CD8-positive, alpha-beta T cell (primary cell): ENCODE measurements at regions of chr2 and their contacts with region 1.

Region 1: DNA sequence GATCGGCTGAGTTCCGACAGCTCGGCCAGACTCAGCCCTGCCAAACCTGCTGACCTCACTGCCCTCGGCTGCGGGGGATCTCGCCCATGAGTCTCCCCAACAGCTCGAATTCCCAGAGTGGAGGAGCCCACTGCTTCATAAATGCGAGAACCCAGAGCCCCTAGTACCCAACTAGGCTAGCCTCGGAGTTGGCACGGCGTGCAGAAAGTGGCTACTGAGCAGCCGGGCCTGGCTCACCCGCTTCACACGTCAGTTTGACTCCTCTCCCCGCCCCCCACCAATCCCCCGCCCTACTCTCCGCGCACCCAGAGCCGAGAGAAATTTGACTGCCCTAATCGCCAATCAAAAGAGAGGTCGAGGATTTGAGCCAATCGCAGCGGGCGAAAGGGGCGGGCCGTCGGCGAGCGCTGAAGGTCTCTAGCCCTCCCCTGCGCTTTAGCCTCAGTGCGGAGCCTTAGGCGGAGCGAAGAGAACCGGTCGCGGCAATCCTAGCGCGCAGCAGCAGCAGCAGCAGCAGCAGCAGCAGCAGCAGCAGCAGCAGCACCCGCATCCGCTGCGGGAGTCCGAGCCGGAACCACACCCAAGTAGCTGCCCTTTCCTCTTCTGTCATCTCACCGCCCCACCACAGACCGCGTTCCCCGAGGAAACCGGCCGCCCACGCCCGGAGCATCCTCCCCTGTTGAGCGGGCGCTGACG is at the start of gene GLS:
- DNase-seq: peak; percentile 93 to 98 (median 96)
- ATAC-seq: peak; percentile 75
- H3K4me3 ChIP-seq: peak within 1 kb of the TSS; percentile 82 to 95
- H3K4me3 Mint-ChIP-seq: peak within 1 kb of the TSS; percentile 98
- H3K27ac ChIP-seq: peak within 1 kb of the TSS; percentile 93 to 94
- H3K27ac Mint-ChIP-seq: peak within 1 kb of the TSS; percentile 99
- H3K4me1 ChIP-seq: peaks cover 50% of the 10 kb centered on the region
- H3K4me1 Mint-ChIP-seq: peaks cover 50% of the 10 kb centered on the region
- H3K27me3 ChIP-seq: no peaks in the 10 kb centered on the region
- H3K27me3 Mint-ChIP-seq: no peaks in the 10 kb centered on the region
- CTCF ChIP-seq: no peak
- total RNA-seq, gene GLS: 254 to 265 TPM

Region 2: GRCh38 chr2:189661148-189661956 is 1219.2 kb before region 1 on chr2 and contains the start of gene ASNSD1:
- CTCF ChIA-PET with region 1: no interaction called
- POLR2A ChIA-PET with region 1: no interaction called
- intact Hi-C with region 1: loop called (anchors 10 kb)
- DNase-seq: peak; percentile 97 to 100 (median 99)
- ATAC-seq: peak; percentile 89
- H3K4me3 ChIP-seq: peak within 1 kb of the TSS; percentile 79 to 88
- H3K4me3 Mint-ChIP-seq: no peak within 1 kb of the TSS
- H3K27ac ChIP-seq: peak within 1 kb of the TSS; percentile 87 to 91
- H3K27ac Mint-ChIP-seq: no peak within 1 kb of the TSS
- H3K4me1 ChIP-seq: peaks cover 47% of the 10 kb centered on the region
- H3K4me1 Mint-ChIP-seq: peaks cover 61% of the 10 kb centered on the region
- H3K27me3 ChIP-seq: no peaks in the 10 kb centered on the region
- H3K27me3 Mint-ChIP-seq: no peaks in the 10 kb centered on the region
- CTCF ChIP-seq: peak; percentile 92
- total RNA-seq, gene ASNSD1: 62.7 to 69.4 TPM

Region 3: DNA sequence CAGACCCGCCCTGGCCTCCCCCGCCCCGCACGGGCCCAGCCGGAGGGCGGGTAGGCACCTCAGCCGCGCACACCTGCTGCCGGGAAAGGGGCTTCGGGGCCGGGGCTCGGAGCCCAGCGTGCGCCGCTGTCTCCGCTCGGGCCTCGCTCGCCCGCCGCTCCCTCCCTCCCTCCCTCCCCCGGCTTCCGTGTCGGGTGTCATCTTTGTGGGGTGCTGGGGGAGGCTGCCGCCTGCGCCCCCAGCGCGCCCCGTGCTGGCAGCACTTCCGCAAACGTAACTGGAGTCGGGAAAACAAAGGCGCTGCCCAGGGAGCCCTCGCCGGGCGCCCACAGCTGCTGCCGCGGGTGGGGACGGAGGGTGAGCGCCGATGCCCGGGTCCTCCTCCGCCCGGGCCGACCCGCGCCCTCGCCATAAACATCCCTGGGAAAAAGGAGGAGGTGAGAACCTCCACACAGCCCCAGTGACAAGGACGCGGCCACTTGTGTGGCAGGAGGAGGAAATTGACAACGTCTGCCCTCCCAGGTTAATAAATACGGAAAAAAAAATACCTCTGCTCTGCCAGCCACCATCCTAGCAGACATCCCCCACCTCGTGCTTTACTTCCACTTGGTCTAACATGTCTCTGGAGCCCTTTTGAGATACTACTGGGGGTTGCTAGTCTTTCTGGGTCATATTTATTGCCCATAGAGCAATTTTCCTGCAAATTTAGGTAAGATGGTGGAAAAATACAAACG is 471.8 kb before region 1 on chr2:
- CTCF ChIA-PET with region 1: no interaction called
- POLR2A ChIA-PET with region 1: interaction called, 11 read pairs
- intact Hi-C with region 1: loop called (anchors 1 to 5 kb)
- DNase-seq: peak; percentile 62 to 92 (median 80)
- ATAC-seq: peak; percentile 56
- H3K4me3 ChIP-seq: peak overlapping the region; percentile 69 to 89
- H3K4me3 Mint-ChIP-seq: peak overlapping the region; percentile 92
- H3K27ac ChIP-seq: peak overlapping the region; percentile 98 to 99
- H3K27ac Mint-ChIP-seq: peak overlapping the region; percentile 99
- H3K4me1 ChIP-seq: peaks cover 51% of the 10 kb centered on the region
- H3K4me1 Mint-ChIP-seq: peaks cover 45% of the 10 kb centered on the region
- H3K27me3 ChIP-seq: no peaks in the 10 kb centered on the region
- H3K27me3 Mint-ChIP-seq: no peaks in the 10 kb centered on the region
- CTCF ChIP-seq: no peak

Region 4: DNA sequence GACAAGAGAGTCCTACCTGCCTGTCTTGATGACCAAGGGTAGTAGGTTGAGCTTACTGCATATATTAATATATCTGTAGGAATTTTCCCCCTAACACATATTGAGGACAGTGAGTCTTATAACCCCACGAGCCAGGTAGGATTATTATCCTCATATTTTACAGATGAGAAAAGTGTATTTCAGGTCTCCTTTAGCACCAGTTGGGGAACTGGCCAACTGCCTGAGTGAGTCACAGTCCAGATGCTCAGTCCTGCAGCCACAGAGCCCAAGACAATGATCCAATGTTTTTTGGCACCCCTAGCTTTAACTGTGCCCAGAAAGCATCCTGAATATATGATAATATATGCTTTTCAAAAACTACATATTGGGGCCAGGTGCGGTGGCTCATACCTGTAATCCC is 30.8 kb before region 1 on chr2:
- CTCF ChIA-PET with region 1: interaction called, 70 read pairs
- POLR2A ChIA-PET with region 1: interaction called, 24 read pairs
- intact Hi-C with region 1: loop called (anchors 1 to 2 kb)
- DNase-seq: no peak
- ATAC-seq: no peak
- H3K4me3 ChIP-seq: no peak overlapping the region
- H3K4me3 Mint-ChIP-seq: no peak overlapping the region
- H3K27ac ChIP-seq: no peak overlapping the region
- H3K27ac Mint-ChIP-seq: no peak overlapping the region
- H3K4me1 ChIP-seq: no peaks in the 10 kb centered on the region
- H3K4me1 Mint-ChIP-seq: peaks cover 2% of the 10 kb centered on the region
- H3K27me3 ChIP-seq: no peaks in the 10 kb centered on the region
- H3K27me3 Mint-ChIP-seq: no peaks in the 10 kb centered on the region
- CTCF ChIP-seq: no peak

Region 5: DNA sequence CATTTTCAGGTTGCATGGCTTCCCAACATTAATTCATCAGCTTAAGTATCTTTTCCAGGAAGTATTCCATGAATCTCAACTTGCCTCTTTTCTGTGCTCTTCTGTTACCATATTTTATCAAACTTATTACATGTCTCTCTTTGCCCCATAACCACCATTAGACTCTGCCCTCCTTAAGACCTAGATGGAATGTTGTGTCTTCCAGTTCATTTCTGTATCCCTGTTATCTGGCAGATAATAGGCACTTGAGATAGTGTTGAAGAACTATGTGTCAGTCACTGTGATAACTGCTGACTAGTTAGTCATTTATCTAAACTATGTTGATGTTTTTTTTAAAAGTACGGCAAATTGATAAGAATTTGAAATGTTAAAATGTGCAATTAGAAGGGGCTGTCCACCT is 41.9 kb after region 1 on chr2:
- CTCF ChIA-PET with region 1: no interaction called
- POLR2A ChIA-PET with region 1: interaction called, 4 read pairs
- intact Hi-C with region 1: loop called in 1 of 2 experiments (anchors 2 kb)
- DNase-seq: no peak
- ATAC-seq: no peak
- H3K4me3 ChIP-seq: no peak overlapping the region
- H3K4me3 Mint-ChIP-seq: no peak overlapping the region
- H3K27ac ChIP-seq: no peak overlapping the region
- H3K27ac Mint-ChIP-seq: peak overlapping the region; percentile 12
- H3K4me1 ChIP-seq: peaks cover under 1% of the 10 kb centered on the region
- H3K4me1 Mint-ChIP-seq: peaks cover 15% of the 10 kb centered on the region
- H3K27me3 ChIP-seq: no peaks in the 10 kb centered on the region
- H3K27me3 Mint-ChIP-seq: no peaks in the 10 kb centered on the region
- CTCF ChIP-seq: no peak

Region 6: DNA sequence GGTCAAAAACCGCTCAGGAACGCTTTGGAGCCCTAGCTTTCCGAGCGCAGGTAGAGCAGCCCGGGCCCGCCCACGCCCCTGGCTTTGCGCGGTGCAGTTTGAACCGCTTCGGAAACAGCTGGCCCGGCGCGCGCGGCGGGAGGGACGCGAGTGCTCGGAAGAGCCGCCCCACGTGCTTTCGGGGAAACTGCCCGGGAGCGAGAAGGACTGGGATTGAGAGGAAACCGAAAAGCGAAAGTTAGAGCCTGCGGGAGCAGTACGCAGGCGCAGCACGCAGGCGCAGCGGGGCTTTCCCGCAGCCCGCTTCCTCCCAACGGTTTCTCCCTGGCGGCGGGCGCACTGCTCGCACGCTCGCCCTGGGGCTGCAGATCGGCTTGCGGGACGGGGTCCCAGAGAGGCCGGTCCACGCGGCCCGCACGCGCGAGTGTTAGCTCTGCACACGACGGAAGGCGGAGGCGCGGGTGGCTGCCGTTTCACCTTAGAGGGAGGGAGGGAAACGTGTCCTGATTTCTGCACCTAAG is 139.8 kb after region 1 on chr2:
- CTCF ChIA-PET with region 1: no interaction called
- POLR2A ChIA-PET with region 1: interaction called, 17 read pairs
- intact Hi-C with region 1: loop called in 1 of 2 experiments (anchors 2 kb)
- DNase-seq: peak; percentile 82 to 98 (median 93)
- ATAC-seq: peak; percentile 72
- H3K4me3 ChIP-seq: peak overlapping the region; percentile 73 to 82
- H3K4me3 Mint-ChIP-seq: no peak overlapping the region
- H3K27ac ChIP-seq: peak overlapping the region; percentile 62 to 86
- H3K27ac Mint-ChIP-seq: no peak overlapping the region
- H3K4me1 ChIP-seq: peaks cover 52% of the 10 kb centered on the region
- H3K4me1 Mint-ChIP-seq: peaks cover 28% of the 10 kb centered on the region
- H3K27me3 ChIP-seq: no peaks in the 10 kb centered on the region
- H3K27me3 Mint-ChIP-seq: no peaks in the 10 kb centered on the region
- CTCF ChIP-seq: no peak

Region 7: GRCh38 chr2:191245046-191245868 is 364.7 kb after region 1 on chr2 and contains the start of gene MYO1B:
- CTCF ChIA-PET with region 1: no interaction called
- POLR2A ChIA-PET with region 1: no interaction called
- intact Hi-C with region 1: no loop called
- DNase-seq: peak in 7 of 9 experiments; percentile 10 to 74 (median 51)
- ATAC-seq: peak; percentile 72
- H3K4me3 ChIP-seq: peak within 1 kb of the TSS; percentile 39 to 64
- H3K4me3 Mint-ChIP-seq: peak within 1 kb of the TSS; percentile 85
- H3K27ac ChIP-seq: no peak within 1 kb of the TSS
- H3K27ac Mint-ChIP-seq: no peak within 1 kb of the TSS
- H3K4me1 ChIP-seq: peaks cover 8% of the 10 kb centered on the region
- H3K4me1 Mint-ChIP-seq: peaks cover 6% of the 10 kb centered on the region
- H3K27me3 ChIP-seq: peaks cover 0 to 6% of the 10 kb centered on the region in 2 experiments
- H3K27me3 Mint-ChIP-seq: peaks cover 10% of the 10 kb centered on the region
- CTCF ChIP-seq: no peak
- total RNA-seq, gene MYO1B: 0.38 to 1.00 TPM